T-cell (primary cell): ENCODE measurements at regions of chr14 and their contacts with region 1.

Region 1: DNA sequence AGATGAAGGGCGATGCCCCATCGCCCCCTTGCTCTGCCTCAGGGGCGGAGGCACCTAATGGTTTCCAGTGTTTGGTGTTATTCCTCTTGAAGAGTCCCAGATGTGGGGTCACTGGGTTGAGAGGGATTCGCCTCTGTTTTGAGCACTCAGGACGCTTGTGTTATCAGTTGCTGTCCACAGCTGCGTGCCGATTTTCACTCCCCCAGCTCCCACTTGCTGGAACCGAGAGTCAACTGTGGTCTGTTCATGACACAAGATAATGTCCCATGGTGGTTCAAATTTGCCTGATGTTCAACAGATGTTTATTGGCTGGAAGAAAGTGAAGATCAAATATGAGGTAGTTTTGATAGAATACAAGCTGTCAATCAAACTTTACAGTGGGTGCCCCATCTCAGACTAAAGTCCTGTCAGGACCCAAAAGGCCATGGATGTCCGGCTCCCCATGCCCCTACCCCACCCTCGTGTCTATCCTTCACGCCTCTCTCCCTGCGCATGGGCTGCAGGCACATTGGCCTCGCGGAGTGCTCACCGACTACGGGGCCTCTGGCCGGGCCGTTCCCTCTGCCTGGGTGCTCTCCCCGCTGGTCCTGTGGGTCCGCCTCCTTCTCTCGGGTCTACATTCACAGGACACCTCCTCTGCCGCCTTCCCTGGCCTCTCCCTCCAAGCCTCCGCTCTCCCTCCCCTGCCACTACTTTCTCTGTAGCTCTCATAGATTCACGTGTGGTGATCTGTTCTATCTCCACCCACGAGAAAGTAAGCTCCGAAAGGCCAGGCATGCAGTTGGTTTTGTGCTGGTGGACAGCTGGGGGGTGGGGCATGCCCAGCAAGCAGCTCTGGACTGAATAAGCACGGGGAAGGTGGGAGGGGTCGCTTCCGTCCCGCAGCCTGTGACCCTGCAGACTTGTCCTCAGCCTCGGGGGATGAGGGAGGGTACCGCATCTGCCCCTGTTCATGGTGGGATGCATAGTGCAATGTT is 6.8 kb upstream of the TRAF3 start:
- DNase-seq: no peak
- ATAC-seq: no peak
- H3K4me3 ChIP-seq: no peak overlapping the region
- H3K4me3 Mint-ChIP-seq: no peak overlapping the region
- H3K27ac ChIP-seq: no peak overlapping the region
- H3K27ac Mint-ChIP-seq: no peak overlapping the region
- H3K4me1 ChIP-seq: peaks cover 7 to 14% of the 10 kb centered on the region in 2 experiments
- H3K4me1 Mint-ChIP-seq: peaks cover 12 to 15% (median 13%) of the 10 kb centered on the region in 3 donors
- H3K27me3 ChIP-seq: peaks cover 0 to 5% of the 10 kb centered on the region in 2 experiments
- H3K27me3 Mint-ChIP-seq: no peaks in the 10 kb centered on the region

Region 2: DNA sequence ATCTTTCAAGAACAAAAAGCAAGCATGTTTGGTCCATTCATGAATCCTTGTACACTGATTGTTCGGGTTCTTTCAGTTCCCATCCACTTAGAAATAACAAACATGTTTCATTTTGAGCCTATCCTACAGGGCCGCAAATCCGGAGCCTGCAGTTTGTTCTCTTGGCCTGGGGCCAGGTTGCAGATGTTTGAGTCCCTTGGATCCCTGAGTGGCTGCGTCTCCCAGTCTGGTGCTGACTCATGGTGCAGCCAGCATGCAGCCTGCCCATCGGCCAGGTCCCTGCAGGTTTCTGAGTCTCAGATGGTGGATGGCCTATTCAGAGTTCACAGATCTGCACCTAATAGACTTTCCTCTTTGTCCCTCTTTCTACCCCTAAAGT is 808.0 kb before region 1 on chr14:
- CTCF ChIA-PET with region 1: interaction called in 1 of 2 experiments, 10 read pairs
- POLR2A ChIA-PET with region 1: no interaction called
- DNase-seq: no peak
- ATAC-seq: no peak
- H3K4me3 ChIP-seq: no peak overlapping the region
- H3K4me3 Mint-ChIP-seq: no peak overlapping the region
- H3K27ac ChIP-seq: no peak overlapping the region
- H3K27ac Mint-ChIP-seq: no peak overlapping the region
- H3K4me1 ChIP-seq: peaks cover 6 to 24% of the 10 kb centered on the region in 2 experiments
- H3K4me1 Mint-ChIP-seq: peaks cover 36 to 38% (median 36%) of the 10 kb centered on the region in 3 donors
- H3K27me3 ChIP-seq: peaks cover 0 to 9% of the 10 kb centered on the region in 2 experiments
- H3K27me3 Mint-ChIP-seq: no peaks in the 10 kb centered on the region